Psoas muscle (tissue), 8 donors: ENCODE measurements at regions of chr11 and their contacts with region 1.

Region 1: DNA sequence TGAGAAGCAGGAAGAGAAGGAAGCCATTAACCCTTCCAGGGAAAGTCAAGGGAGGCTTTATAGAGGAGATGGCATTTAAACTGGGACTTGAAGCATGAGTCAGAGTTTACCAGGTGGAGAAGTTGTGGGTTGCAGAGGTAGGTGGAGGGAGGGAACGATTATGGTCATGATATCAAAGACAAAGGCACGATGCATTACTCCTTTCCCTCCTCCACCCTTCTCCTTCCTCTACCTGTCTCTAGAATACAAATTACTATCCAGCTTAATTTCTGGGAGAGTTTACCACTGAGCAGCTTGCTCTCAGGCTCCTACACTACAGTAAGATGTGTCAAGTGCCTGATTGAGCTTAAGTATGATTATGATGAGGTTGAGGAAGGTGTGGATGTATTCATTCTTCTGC is 151.7 kb downstream of the NELL1 start:
- DNase-seq: no peak
- ATAC-seq: no peak
- H3K4me3 ChIP-seq: no peak overlapping the region
- H3K27ac ChIP-seq: no peak overlapping the region
- H3K4me1 ChIP-seq: no peaks in the 10 kb centered on the region
- H3K27me3 ChIP-seq: no peaks in the 10 kb centered on the region
- CTCF ChIP-seq: no peak

Region 2: GRCh38 chr11:20881328-20882079 is 60.5 kb after region 1 on chr11:
- intact Hi-C with region 1: loop called in 1 of 2 experiments (anchors 2 kb)
- DNase-seq: no peak
- ATAC-seq: no peak
- H3K4me3 ChIP-seq: no peak overlapping the region
- H3K27ac ChIP-seq: no peak overlapping the region
- H3K4me1 ChIP-seq: no peaks in the 10 kb centered on the region
- H3K27me3 ChIP-seq: peaks cover 0 to 2% (median 0%) of the 10 kb centered on the region in 3 donors
- CTCF ChIP-seq: no peak